ENCODE measurements at regions of chr19 and their contacts with region 1.

Region 1: GRCh38 chr19:44653977-44654774 is 10.5 kb downstream of the PVR start:
- DNase-seq: peak; percentile 42 to 85 (median 72)
- ATAC-seq: peak; percentile 95
- H3K4me3 ChIP-seq: no peak overlapping the region
- H3K4me3 Mint-ChIP-seq: no peak overlapping the region
- H3K27ac ChIP-seq: no peak overlapping the region
- H3K27ac Mint-ChIP-seq: no peak overlapping the region
- H3K4me1 ChIP-seq: peaks cover 11% of the 10 kb centered on the region
- H3K4me1 Mint-ChIP-seq: peaks cover 9% of the 10 kb centered on the region
- H3K27me3 ChIP-seq: no peaks in the 10 kb centered on the region
- H3K27me3 Mint-ChIP-seq: peaks cover 3% of the 10 kb centered on the region
- CTCF ChIP-seq: peak; percentile 19

Region 2: GRCh38 chr19:44570984-44571684 is 83.0 kb before region 1 on chr19:
- CTCF ChIA-PET with region 1: interaction called, 17 read pairs
- POLR2A ChIA-PET with region 1: no interaction called
- intact Hi-C with region 1: loop called (anchors 1 kb)
- DNase-seq: peak in 8 of 9 experiments; percentile 4 to 66 (median 45)
- ATAC-seq: no peak
- H3K4me3 ChIP-seq: no peak overlapping the region
- H3K4me3 Mint-ChIP-seq: no peak overlapping the region
- H3K27ac ChIP-seq: no peak overlapping the region
- H3K27ac Mint-ChIP-seq: no peak overlapping the region
- H3K4me1 ChIP-seq: no peaks in the 10 kb centered on the region
- H3K4me1 Mint-ChIP-seq: no peaks in the 10 kb centered on the region
- H3K27me3 ChIP-seq: no peaks in the 10 kb centered on the region
- H3K27me3 Mint-ChIP-seq: peaks cover 20% of the 10 kb centered on the region
- CTCF ChIP-seq: peak; percentile 57

Region 3: GRCh38 chr19:44576843-44577565 is 77.2 kb before region 1 on chr19:
- CTCF ChIA-PET with region 1: interaction called, 17 read pairs
- POLR2A ChIA-PET with region 1: no interaction called
- intact Hi-C with region 1: no loop called
- DNase-seq: peak in 2 of 9 experiments; percentile 16 to 50
- ATAC-seq: no peak
- H3K4me3 ChIP-seq: no peak overlapping the region
- H3K4me3 Mint-ChIP-seq: no peak overlapping the region
- H3K27ac ChIP-seq: no peak overlapping the region
- H3K27ac Mint-ChIP-seq: no peak overlapping the region
- H3K4me1 ChIP-seq: no peaks in the 10 kb centered on the region
- H3K4me1 Mint-ChIP-seq: no peaks in the 10 kb centered on the region
- H3K27me3 ChIP-seq: no peaks in the 10 kb centered on the region
- H3K27me3 Mint-ChIP-seq: peaks cover 5% of the 10 kb centered on the region
- CTCF ChIP-seq: peak; percentile 24

Region 4: DNA sequence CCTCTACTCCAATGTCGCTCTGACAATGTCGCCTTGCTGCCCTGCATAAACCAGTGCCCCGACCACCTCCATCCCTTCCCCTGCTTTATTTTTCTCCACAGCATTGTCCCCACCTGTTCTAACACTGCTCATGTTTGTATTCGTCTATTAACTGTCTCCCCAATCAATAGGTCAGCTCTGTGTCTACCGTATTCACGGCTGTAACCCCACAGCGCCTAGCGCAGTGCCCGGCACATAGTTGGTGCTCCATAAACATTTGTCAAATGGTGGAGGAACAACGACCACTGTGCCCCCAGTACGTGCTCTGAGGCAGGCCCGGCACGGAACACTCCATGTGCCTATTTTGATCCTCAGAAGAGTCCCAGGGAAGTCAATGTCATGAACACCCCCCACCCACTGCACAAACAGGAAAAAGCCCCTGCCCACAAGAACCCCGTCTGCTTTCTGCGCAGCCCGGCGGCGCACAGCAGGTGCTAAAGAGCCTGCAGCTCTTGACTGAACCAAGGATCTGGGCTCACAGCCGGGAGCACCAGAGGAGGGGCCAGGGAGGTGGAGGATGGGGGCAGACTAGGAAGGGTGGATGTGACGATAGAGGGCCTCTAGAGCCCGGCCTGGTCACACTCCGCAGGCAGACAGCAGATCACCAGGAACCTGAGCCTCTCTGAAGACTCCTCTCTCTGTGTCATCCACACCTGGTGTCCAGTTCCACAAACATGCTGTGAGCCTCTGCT is 42.9 kb after region 1 on chr19:
- CTCF ChIA-PET with region 1: no interaction called
- POLR2A ChIA-PET with region 1: no interaction called
- intact Hi-C with region 1: no loop called
- DNase-seq: no peak
- ATAC-seq: no peak
- H3K4me3 ChIP-seq: no peak overlapping the region
- H3K4me3 Mint-ChIP-seq: no peak overlapping the region
- H3K27ac ChIP-seq: no peak overlapping the region
- H3K27ac Mint-ChIP-seq: no peak overlapping the region
- H3K4me1 ChIP-seq: peaks cover 15% of the 10 kb centered on the region
- H3K4me1 Mint-ChIP-seq: peaks cover 9% of the 10 kb centered on the region
- H3K27me3 ChIP-seq: no peaks in the 10 kb centered on the region
- H3K27me3 Mint-ChIP-seq: peaks cover 3% of the 10 kb centered on the region
- CTCF ChIP-seq: no peak